ENCODE measurements at regions of chr3 and their contacts with region 1.

Region 1: DNA sequence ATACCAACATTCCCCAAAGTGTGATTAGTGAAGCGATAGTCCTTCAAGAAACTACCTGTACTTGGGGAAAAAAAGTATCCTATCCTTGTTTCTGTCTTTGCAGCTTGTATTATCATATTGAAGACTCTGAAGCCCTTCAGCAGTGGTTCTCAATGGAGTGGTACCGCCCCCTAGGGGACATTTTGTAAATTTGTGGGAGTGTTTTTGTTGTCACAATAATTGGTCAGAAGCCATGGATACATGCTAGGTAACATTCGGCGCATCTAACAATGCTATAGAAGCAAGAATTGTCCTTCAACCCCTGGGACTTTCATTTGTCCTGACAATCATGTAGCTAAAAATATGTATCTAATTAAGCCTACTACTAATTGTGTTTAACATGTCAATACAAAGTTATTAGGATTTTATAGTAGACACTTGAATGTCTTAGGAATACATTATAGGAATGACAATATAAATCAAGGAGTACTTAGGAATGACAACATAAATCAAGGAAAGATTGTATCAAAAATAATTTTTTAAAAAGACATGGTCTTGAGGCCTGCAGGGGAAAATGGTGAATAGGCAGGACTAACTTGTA is 53.7 kb downstream of the NMD3 start:
- DNase-seq: no peak
- ATAC-seq: peak; percentile 92
- H3K4me3 ChIP-seq: no peak overlapping the region
- H3K27ac ChIP-seq: no peak overlapping the region
- H3K4me1 ChIP-seq: no peaks in the 10 kb centered on the region
- H3K27me3 ChIP-seq: no peaks in the 10 kb centered on the region
- CTCF ChIP-seq: peak; percentile 58 to 70 (median 63)
- EP300 ChIP-seq: no peak
- POLR2A ChIP-seq: no peak
- RAD21 ChIP-seq: peak; percentile 72

Region 2: DNA sequence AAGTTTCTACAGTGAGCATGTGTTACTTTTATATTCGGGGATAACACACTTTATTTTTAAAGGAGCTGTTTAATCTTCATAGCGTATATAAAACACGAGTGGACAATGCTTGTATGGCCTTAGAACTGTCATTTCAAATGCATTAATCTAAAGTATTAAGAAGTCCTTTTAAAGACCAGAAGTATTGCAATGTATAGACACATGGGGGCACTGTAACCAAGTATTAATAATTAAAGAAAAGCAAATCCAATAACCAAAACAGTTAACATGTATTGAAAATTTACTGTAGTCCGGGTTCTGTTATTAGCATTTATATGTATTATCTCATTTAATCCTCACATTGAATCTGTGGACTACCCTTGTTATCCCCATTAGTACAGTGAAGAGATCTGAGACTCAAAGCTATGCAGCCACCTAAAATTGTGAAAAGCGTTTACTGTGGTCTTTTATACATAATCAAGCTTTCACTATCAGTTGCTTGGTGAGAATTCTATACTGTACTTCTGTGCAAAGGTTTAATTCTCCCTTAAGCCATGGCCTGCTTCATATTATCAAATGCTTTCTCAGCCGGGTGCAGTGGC is 587.8 kb before region 1 on chr3:
- CTCF ChIA-PET with region 1: interaction called, 5 read pairs
- POLR2A ChIA-PET with region 1: interaction called, 5 read pairs
- RAD21 ChIA-PET with region 1: no interaction called
- SMC1A ChIA-PET with region 1: no interaction called
- in situ Hi-C with region 1: no loop called
- intact Hi-C with region 1: loop called (anchors 1 kb)
- DNase-seq: no peak
- ATAC-seq: peak; percentile 67
- H3K4me3 ChIP-seq: no peak overlapping the region
- H3K27ac ChIP-seq: no peak overlapping the region
- H3K4me1 ChIP-seq: no peaks in the 10 kb centered on the region
- H3K27me3 ChIP-seq: no peaks in the 10 kb centered on the region
- CTCF ChIP-seq: peak; percentile 23 to 45 (median 29); a peak in 4 of 6 replicates
- EP300 ChIP-seq: no peak
- POLR2A ChIP-seq: no peak
- RAD21 ChIP-seq: peak; percentile 30; the same call in 1 of the 2 replicates

Region 3: GRCh38 chr3:161096771-161097355 is 177.9 kb before region 1 on chr3:
- CTCF ChIA-PET with region 1: interaction called, 35 read pairs
- POLR2A ChIA-PET with region 1: no interaction called
- RAD21 ChIA-PET with region 1: interaction called, 4 read pairs
- SMC1A ChIA-PET with region 1: interaction called, 15 read pairs
- in situ Hi-C with region 1: no loop called
- intact Hi-C with region 1: loop called (anchors 2 kb)
- DNase-seq: no peak
- ATAC-seq: peak; percentile 69
- H3K4me3 ChIP-seq: no peak overlapping the region
- H3K27ac ChIP-seq: no peak overlapping the region
- H3K4me1 ChIP-seq: no peaks in the 10 kb centered on the region
- H3K27me3 ChIP-seq: no peaks in the 10 kb centered on the region; a peak in 1 of 4 replicates
- CTCF ChIP-seq: peak; percentile 41 to 43 (median 42); a peak in 5 of 6 replicates
- EP300 ChIP-seq: no peak
- POLR2A ChIP-seq: no peak
- RAD21 ChIP-seq: no peak

Region 4: GRCh38 chr3:161163297-161163696 is 111.5 kb before region 1 on chr3:
- CTCF ChIA-PET with region 1: no interaction called
- POLR2A ChIA-PET with region 1: no interaction called
- RAD21 ChIA-PET with region 1: no interaction called
- SMC1A ChIA-PET with region 1: no interaction called
- in situ Hi-C with region 1: no loop called
- intact Hi-C with region 1: no loop called
- DNase-seq: no peak
- ATAC-seq: no peak
- H3K4me3 ChIP-seq: no peak overlapping the region
- H3K27ac ChIP-seq: no peak overlapping the region
- H3K4me1 ChIP-seq: no peaks in the 10 kb centered on the region
- H3K27me3 ChIP-seq: no peaks in the 10 kb centered on the region
- CTCF ChIP-seq: no peak
- EP300 ChIP-seq: no peak
- POLR2A ChIP-seq: no peak
- RAD21 ChIP-seq: no peak

Region 5: DNA sequence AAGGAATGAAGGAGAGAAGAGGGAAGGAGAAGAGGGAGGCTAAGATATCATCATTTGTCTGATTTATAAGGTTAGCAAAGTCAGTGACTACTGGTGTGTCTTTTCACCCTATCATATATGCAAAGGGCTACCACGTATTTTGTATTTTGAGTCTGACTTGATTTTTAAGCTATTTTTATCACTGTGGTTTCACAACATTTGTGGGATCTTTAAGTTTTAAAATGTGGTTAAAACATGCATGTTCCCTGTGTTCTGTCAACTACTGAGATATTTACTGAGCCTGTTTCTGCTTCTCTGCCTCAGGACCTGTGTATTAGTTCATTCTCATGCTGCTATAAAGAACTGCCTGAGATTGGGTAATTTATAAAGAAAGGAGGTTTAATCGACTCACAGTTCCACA is 119.0 kb after region 1 on chr3:
- CTCF ChIA-PET with region 1: interaction called, 17 read pairs
- POLR2A ChIA-PET with region 1: no interaction called
- RAD21 ChIA-PET with region 1: no interaction called
- SMC1A ChIA-PET with region 1: interaction called, 3 read pairs
- in situ Hi-C with region 1: no loop called
- intact Hi-C with region 1: no loop called
- DNase-seq: no peak
- ATAC-seq: peak; percentile 69
- H3K4me3 ChIP-seq: no peak overlapping the region
- H3K27ac ChIP-seq: no peak overlapping the region
- H3K4me1 ChIP-seq: no peaks in the 10 kb centered on the region
- H3K27me3 ChIP-seq: no peaks in the 10 kb centered on the region
- CTCF ChIP-seq: no peak
- EP300 ChIP-seq: no peak
- POLR2A ChIP-seq: no peak
- RAD21 ChIP-seq: no peak

Region 6: GRCh38 chr3:161423911-161424522 is 149.2 kb after region 1 on chr3:
- CTCF ChIA-PET with region 1: interaction called, 100 read pairs
- POLR2A ChIA-PET with region 1: no interaction called
- RAD21 ChIA-PET with region 1: interaction called, 28 read pairs
- SMC1A ChIA-PET with region 1: interaction called, 25 read pairs
- in situ Hi-C with region 1: no loop called
- intact Hi-C with region 1: loop called (anchors 1 kb)
- DNase-seq: no peak
- ATAC-seq: peak; percentile 76
- H3K4me3 ChIP-seq: no peak overlapping the region
- H3K27ac ChIP-seq: no peak overlapping the region
- H3K4me1 ChIP-seq: no peaks in the 10 kb centered on the region
- H3K27me3 ChIP-seq: no peaks in the 10 kb centered on the region
- CTCF ChIP-seq: peak; percentile 44 to 68 (median 47); a peak in 5 of 6 replicates
- EP300 ChIP-seq: no peak
- POLR2A ChIP-seq: no peak
- RAD21 ChIP-seq: peak; percentile 83

Measured in GM12878 (cell line).